Gastrocnemius medialis (tissue), 4 donors: ENCODE measurements at regions of chr2 and their contacts with region 1.

Region 1: GRCh38 chr2:30172627-30173026 is 25.8 kb downstream of the YPEL5 start:
- DNase-seq: no peak
- ATAC-seq: no peak
- H3K4me3 ChIP-seq: no peak overlapping the region
- H3K27ac ChIP-seq: no peak overlapping the region
- H3K4me1 ChIP-seq: peaks cover 0 to 2% of the 10 kb centered on the region in 2 donors
- H3K27me3 ChIP-seq: no peaks in the 10 kb centered on the region
- CTCF ChIP-seq: no peak
- POLR2A ChIP-seq: no peak

Region 2: GRCh38 chr2:30225131-30225762 is 52.6 kb after region 1 on chr2:
- in situ Hi-C with region 1: no loop called
- intact Hi-C with region 1: loop called (anchors 5 kb)
- DNase-seq: peak; percentile 59 to 72
- ATAC-seq: peak; percentile 87 to 96
- H3K4me3 ChIP-seq: peak overlapping the region; percentile 31 to 40 (median 38)
- H3K27ac ChIP-seq: peak overlapping the region; percentile 63 to 75 (median 66)
- H3K4me1 ChIP-seq: peaks cover 21 to 22% of the 10 kb centered on the region in 2 donors
- H3K27me3 ChIP-seq: peaks cover 0 to 4% (median 0%) of the 10 kb centered on the region in 3 donors
- CTCF ChIP-seq: no peak
- POLR2A ChIP-seq: peak in 1 of 2 donors; percentile 13

Region 3: GRCh38 chr2:30736461-30737325 is 564.1 kb after region 1 on chr2:
- in situ Hi-C with region 1: no loop called
- intact Hi-C with region 1: no loop called
- DNase-seq: no peak
- ATAC-seq: no peak
- H3K4me3 ChIP-seq: no peak overlapping the region
- H3K27ac ChIP-seq: no peak overlapping the region
- H3K4me1 ChIP-seq: no peaks in the 10 kb centered on the region
- H3K27me3 ChIP-seq: no peaks in the 10 kb centered on the region
- CTCF ChIP-seq: no peak
- POLR2A ChIP-seq: no peak